Activated CD8-positive, alpha-beta T cell treated with anti-CD3 and anti-CD28 coated beads, Interleukin-2, amount 10 ng/mL, durations not matched to agents 7 days and 5 days (primary cell): ENCODE measurements at regions of chr9 and their contacts with region 1.

Region 1: GRCh38 chr9:108953983-108954574 is 19.9 kb downstream of the ABITRAM start:
- DNase-seq: no peak
- ATAC-seq: no peak
- H3K4me3 Mint-ChIP-seq: no peak overlapping the region
- H3K27ac Mint-ChIP-seq: no peak overlapping the region
- H3K4me1 Mint-ChIP-seq: no peaks in the 10 kb centered on the region
- H3K27me3 Mint-ChIP-seq: no peaks in the 10 kb centered on the region

Region 2: DNA sequence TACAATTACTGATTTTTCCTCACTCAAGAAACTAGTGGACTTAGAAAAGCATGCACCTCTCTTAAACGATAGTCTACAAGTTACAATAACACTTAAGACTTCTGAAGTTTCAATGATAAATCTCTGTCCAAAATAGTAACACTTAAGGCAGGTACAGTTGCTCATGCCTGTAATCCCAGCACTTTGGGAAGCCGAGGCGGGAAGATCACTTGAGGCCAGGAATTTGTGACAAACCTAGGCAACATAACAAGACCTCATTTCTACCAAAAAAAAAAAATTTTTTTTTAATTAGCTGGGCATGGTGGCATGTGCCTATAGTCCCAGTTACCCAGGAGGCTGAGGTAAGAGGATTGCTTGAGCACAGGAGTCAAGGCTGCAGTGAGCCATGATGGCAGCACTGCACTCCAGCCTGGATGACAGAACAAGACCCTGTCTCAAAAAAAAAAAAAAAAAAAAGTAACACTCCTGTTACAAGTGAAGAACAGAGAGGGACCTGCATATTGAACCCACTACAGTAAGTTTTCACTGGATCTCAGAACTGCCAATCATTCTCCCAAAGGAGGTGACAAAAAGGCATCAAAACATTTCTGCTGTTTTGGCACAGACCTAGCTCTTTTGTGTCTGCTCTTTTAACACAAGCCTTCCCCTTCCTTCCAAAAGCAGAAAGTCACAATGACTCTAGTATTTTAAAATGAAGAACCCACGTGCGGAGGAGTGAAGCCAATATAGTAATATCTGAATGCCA is 16.3 kb before region 1 on chr9:
- CTCF ChIA-PET with region 1: interaction called, 15 read pairs
- POLR2A ChIA-PET with region 1: no interaction called
- DNase-seq: no peak
- ATAC-seq: no peak
- H3K4me3 Mint-ChIP-seq: no peak overlapping the region
- H3K27ac Mint-ChIP-seq: no peak overlapping the region
- H3K4me1 Mint-ChIP-seq: peaks cover 17% of the 10 kb centered on the region
- H3K27me3 Mint-ChIP-seq: no peaks in the 10 kb centered on the region